Endothelial cell of umbilical vein (primary cell): ENCODE measurements at regions of chr13 and their contacts with region 1.

Region 1: DNA sequence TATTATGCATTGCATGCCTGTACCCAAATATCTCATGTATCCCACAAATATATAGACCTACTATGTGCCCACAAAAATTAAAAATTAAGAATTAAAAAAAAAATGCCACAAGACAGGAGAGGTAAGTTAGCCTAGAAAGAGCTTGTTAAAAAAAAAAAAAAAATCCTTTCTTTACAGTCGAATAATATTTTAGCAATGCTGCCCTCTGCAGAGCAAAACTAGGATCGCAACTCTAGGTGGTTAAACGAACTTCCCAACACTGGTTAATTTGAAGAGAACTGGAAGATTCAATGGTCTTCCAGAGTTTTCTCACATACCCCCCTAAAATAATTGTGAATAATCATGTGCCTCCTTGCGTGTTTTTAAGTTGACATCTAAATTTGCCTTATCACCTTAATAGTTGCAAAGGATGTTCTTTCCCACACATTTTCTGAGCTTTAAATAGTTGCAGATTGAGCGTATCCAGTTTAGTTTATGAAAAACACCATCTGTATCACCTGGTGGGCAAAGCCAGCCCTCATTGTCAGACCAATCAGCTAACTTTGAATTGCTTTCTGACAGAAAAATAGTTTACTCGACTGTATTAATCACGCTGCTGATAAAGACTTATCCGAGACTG is 47.4 kb upstream of the RCBTB2 start:
- DNase-seq: peak; percentile 87
- H3K4me3 ChIP-seq: no peak overlapping the region
- H3K27ac ChIP-seq: no peak overlapping the region
- H3K4me1 ChIP-seq: peaks cover 13% of the 10 kb centered on the region
- H3K27me3 ChIP-seq: peaks cover 0 to 4% of the 10 kb centered on the region in 2 experiments
- CTCF ChIP-seq: peak; percentile 45 to 46
- POLR2A ChIP-seq: no peak

Region 2: GRCh38 chr13:47794963-47795362 is 785.3 kb before region 1 on chr13:
- CTCF ChIA-PET with region 1: interaction called, 11 read pairs
- POLR2A ChIA-PET with region 1: no interaction called
- dilution Hi-C with region 1: no loop called
- intact Hi-C with region 1: no loop called
- DNase-seq: no peak
- H3K4me3 ChIP-seq: no peak overlapping the region
- H3K27ac ChIP-seq: no peak overlapping the region
- H3K4me1 ChIP-seq: no peaks in the 10 kb centered on the region
- H3K27me3 ChIP-seq: no peaks in the 10 kb centered on the region
- CTCF ChIP-seq: peak; percentile 15 to 39
- POLR2A ChIP-seq: no peak

Region 3: GRCh38 chr13:48311223-48311622 is 269.1 kb before region 1 on chr13:
- CTCF ChIA-PET with region 1: interaction called, 13 read pairs
- POLR2A ChIA-PET with region 1: no interaction called
- dilution Hi-C with region 1: no loop called
- intact Hi-C with region 1: no loop called
- DNase-seq: no peak
- H3K4me3 ChIP-seq: no peak overlapping the region
- H3K27ac ChIP-seq: no peak overlapping the region
- H3K4me1 ChIP-seq: no peaks in the 10 kb centered on the region
- H3K27me3 ChIP-seq: no peaks in the 10 kb centered on the region
- CTCF ChIP-seq: no peak
- POLR2A ChIP-seq: no peak

Region 4: GRCh38 chr13:48377857-48378256 is 202.4 kb before region 1 on chr13:
- CTCF ChIA-PET with region 1: interaction called, 11 read pairs
- POLR2A ChIA-PET with region 1: no interaction called
- dilution Hi-C with region 1: no loop called
- intact Hi-C with region 1: no loop called
- DNase-seq: no peak
- H3K4me3 ChIP-seq: no peak overlapping the region
- H3K27ac ChIP-seq: no peak overlapping the region
- H3K4me1 ChIP-seq: peaks cover 4% of the 10 kb centered on the region
- H3K27me3 ChIP-seq: no peaks in the 10 kb centered on the region
- CTCF ChIP-seq: no peak
- POLR2A ChIP-seq: no peak

Region 5: GRCh38 chr13:48412881-48413351 is 167.4 kb before region 1 on chr13 and contains the start of gene LPAR6:
- CTCF ChIA-PET with region 1: interaction called, 45 read pairs
- POLR2A ChIA-PET with region 1: interaction called, 3 read pairs
- dilution Hi-C with region 1: no loop called
- intact Hi-C with region 1: no loop called
- DNase-seq: peak; percentile 88
- H3K4me3 ChIP-seq: peak within 1 kb of the TSS; percentile 74 to 99 (median 76)
- H3K27ac ChIP-seq: peak within 1 kb of the TSS; percentile 95
- H3K4me1 ChIP-seq: peaks cover 17% of the 10 kb centered on the region
- H3K27me3 ChIP-seq: no peaks in the 10 kb centered on the region
- CTCF ChIP-seq: no peak
- POLR2A ChIP-seq: peak; percentile 73
- total RNA-seq, gene LPAR6: 22.3 and 22.9 TPM in 2 replicates

Region 6: DNA sequence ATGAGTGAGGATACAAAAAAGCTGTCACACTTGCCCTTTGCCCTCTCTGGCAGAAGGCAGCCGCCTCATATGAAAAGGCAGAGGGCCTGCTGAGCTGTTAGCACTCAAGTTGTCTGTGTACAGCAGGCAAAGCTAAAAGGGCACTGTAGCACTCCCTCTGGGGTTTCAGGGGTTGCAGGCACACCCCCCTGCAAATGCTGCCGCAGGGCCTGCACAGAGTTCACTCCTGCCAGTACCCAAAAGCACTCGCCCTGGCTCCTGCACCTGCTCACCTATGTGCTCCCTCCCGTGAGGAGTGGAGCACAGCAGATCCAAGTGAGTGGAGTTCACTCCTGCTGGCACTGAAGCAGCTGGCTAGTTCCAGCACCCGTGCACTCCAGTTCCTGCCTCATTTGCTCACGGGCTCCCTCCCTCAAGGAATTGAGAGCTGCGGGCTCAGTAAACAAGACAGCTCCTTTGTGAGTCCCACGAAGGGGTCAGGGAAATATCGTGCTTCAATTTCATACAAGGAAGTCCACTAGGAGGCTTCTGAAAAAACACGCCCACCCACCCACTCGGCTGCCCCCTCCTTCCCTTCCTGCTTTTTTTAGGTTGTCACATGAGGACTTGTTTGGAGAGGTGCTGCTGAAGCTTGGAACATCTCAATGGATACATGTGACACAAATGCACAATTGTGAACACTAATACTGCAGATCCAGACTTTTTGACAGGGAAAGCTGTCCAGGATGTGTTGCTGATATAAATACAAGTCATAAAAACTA is 37.5 kb before region 1 on chr13:
- CTCF ChIA-PET with region 1: interaction called, 20 read pairs
- POLR2A ChIA-PET with region 1: no interaction called
- dilution Hi-C with region 1: no loop called
- intact Hi-C with region 1: no loop called
- DNase-seq: peak; percentile 86
- H3K4me3 ChIP-seq: no peak overlapping the region
- H3K27ac ChIP-seq: no peak overlapping the region
- H3K4me1 ChIP-seq: no peaks in the 10 kb centered on the region
- H3K27me3 ChIP-seq: no peaks in the 10 kb centered on the region
- CTCF ChIP-seq: peak in 1 of 2 donors; percentile 52
- POLR2A ChIP-seq: no peak

Region 7: GRCh38 chr13:48769107-48769704 is 188.9 kb after region 1 on chr13:
- CTCF ChIA-PET with region 1: interaction called, 18 read pairs
- POLR2A ChIA-PET with region 1: no interaction called
- dilution Hi-C with region 1: no loop called
- intact Hi-C with region 1: no loop called
- DNase-seq: peak; percentile 93
- H3K4me3 ChIP-seq: no peak overlapping the region
- H3K27ac ChIP-seq: no peak overlapping the region
- H3K4me1 ChIP-seq: no peaks in the 10 kb centered on the region
- H3K27me3 ChIP-seq: peaks cover 15 to 30% of the 10 kb centered on the region in 2 experiments
- CTCF ChIP-seq: peak; percentile 92 to 98
- POLR2A ChIP-seq: no peak